CD14-positive monocyte (primary cell): ENCODE measurements at regions of chr4 and their contacts with region 1.

Region 1: GRCh38 chr4:101347557-101348366 is 436 bp upstream of the PPP3CA start:
- DNase-seq: peak; percentile 90 to 96 (median 95)
- H3K4me3 ChIP-seq: peak overlapping the region; percentile 78 to 97 (median 96)
- H3K4me3 Mint-ChIP-seq: peak overlapping the region; percentile 97 to 98
- H3K27ac ChIP-seq: peak overlapping the region; percentile 87 to 90
- H3K27ac Mint-ChIP-seq: peak overlapping the region; percentile 83 to 97 (median 96)
- H3K4me1 ChIP-seq: peaks cover 23 to 33% of the 10 kb centered on the region in 2 donors
- H3K4me1 Mint-ChIP-seq: peaks cover 42% of the 10 kb centered on the region
- H3K27me3 ChIP-seq: peaks cover 0 to 6% of the 10 kb centered on the region in 2 donors
- H3K27me3 Mint-ChIP-seq: peaks cover 0 to 7% (median 7%) of the 10 kb centered on the region in 3 donors
- CTCF ChIP-seq: no peak

Region 2: GRCh38 chr4:101191302-101192098 is 156.3 kb before region 1 on chr4:
- intact Hi-C with region 1: loop called (anchors 10 kb)
- DNase-seq: no peak
- H3K4me3 ChIP-seq: no peak overlapping the region
- H3K4me3 Mint-ChIP-seq: no peak overlapping the region
- H3K27ac ChIP-seq: no peak overlapping the region
- H3K27ac Mint-ChIP-seq: peak overlapping the region in 3 of 7 donors; percentile 1 to 38 (median 12)
- H3K4me1 ChIP-seq: no peaks in the 10 kb centered on the region
- H3K4me1 Mint-ChIP-seq: peaks cover 2% of the 10 kb centered on the region
- H3K27me3 ChIP-seq: no peaks in the 10 kb centered on the region
- H3K27me3 Mint-ChIP-seq: no peaks in the 10 kb centered on the region
- CTCF ChIP-seq: no peak

Region 3: GRCh38 chr4:101282076-101282844 is 65.5 kb before region 1 on chr4:
- intact Hi-C with region 1: loop called in 1 of 2 experiments (anchors 10 kb)
- DNase-seq: peak; percentile 15 to 55 (median 48)
- H3K4me3 ChIP-seq: no peak overlapping the region
- H3K4me3 Mint-ChIP-seq: peak overlapping the region; percentile 30 to 48
- H3K27ac ChIP-seq: no peak overlapping the region
- H3K27ac Mint-ChIP-seq: peak overlapping the region in 3 of 7 donors; percentile 29 to 69 (median 35)
- H3K4me1 ChIP-seq: peaks cover 23 to 42% of the 10 kb centered on the region in 2 donors
- H3K4me1 Mint-ChIP-seq: peaks cover 46% of the 10 kb centered on the region
- H3K27me3 ChIP-seq: no peaks in the 10 kb centered on the region
- H3K27me3 Mint-ChIP-seq: no peaks in the 10 kb centered on the region
- CTCF ChIP-seq: no peak

Region 4: GRCh38 chr4:101334963-101335572 is 12.7 kb before region 1 on chr4:
- intact Hi-C with region 1: no loop called
- DNase-seq: no peak
- H3K4me3 ChIP-seq: no peak overlapping the region
- H3K4me3 Mint-ChIP-seq: no peak overlapping the region
- H3K27ac ChIP-seq: no peak overlapping the region
- H3K27ac Mint-ChIP-seq: no peak overlapping the region
- H3K4me1 ChIP-seq: no peaks in the 10 kb centered on the region
- H3K4me1 Mint-ChIP-seq: peaks cover 12% of the 10 kb centered on the region
- H3K27me3 ChIP-seq: no peaks in the 10 kb centered on the region
- H3K27me3 Mint-ChIP-seq: no peaks in the 10 kb centered on the region
- CTCF ChIP-seq: no peak

Region 5: GRCh38 chr4:101596781-101597552 is 249.2 kb after region 1 on chr4:
- intact Hi-C with region 1: loop called in 1 of 2 experiments (anchors 10 kb)
- DNase-seq: peak; percentile 18 to 41 (median 21)
- H3K4me3 ChIP-seq: no peak overlapping the region
- H3K4me3 Mint-ChIP-seq: no peak overlapping the region
- H3K27ac ChIP-seq: peak overlapping the region in 1 of 2 donors; percentile 53
- H3K27ac Mint-ChIP-seq: peak overlapping the region in 6 of 7 donors; percentile 24 to 85 (median 60)
- H3K4me1 ChIP-seq: peaks cover 24 to 34% of the 10 kb centered on the region in 2 donors
- H3K4me1 Mint-ChIP-seq: peaks cover 35% of the 10 kb centered on the region
- H3K27me3 ChIP-seq: no peaks in the 10 kb centered on the region
- H3K27me3 Mint-ChIP-seq: no peaks in the 10 kb centered on the region
- CTCF ChIP-seq: no peak